ENCODE measurements at regions of chr10 and their contacts with region 1.

Region 1: GRCh38 chr10:93554760-93555432 is 11.6 kb upstream of the FFAR4 start:
- DNase-seq: peak; percentile 58 to 93
- H3K4me3 ChIP-seq: no peak overlapping the region
- H3K27ac ChIP-seq: no peak overlapping the region
- H3K4me1 ChIP-seq: peaks cover 0 to 4% (median 1%) of the 10 kb centered on the region in 4 experiments; a peak in 2 of 7 replicates
- H3K27me3 ChIP-seq: no peaks in the 10 kb centered on the region
- CTCF ChIP-seq: peak; percentile 78 to 96 (median 93)
- EP300 ChIP-seq: no peak
- POLR2A ChIP-seq: no peak
- RAD21 ChIP-seq: peak; percentile 77 to 78

Region 2: GRCh38 chr10:93541402-93542357 is 13.2 kb before region 1 on chr10:
- CTCF ChIA-PET with region 1: interaction called, 78 read pairs
- POLR2A ChIA-PET with region 1: no interaction called
- DNase-seq: peak in 1 of 2 experiments; percentile 83
- H3K4me3 ChIP-seq: no peak overlapping the region; a peak in 1 of 8 replicates
- H3K27ac ChIP-seq: no peak overlapping the region
- H3K4me1 ChIP-seq: no peaks in the 10 kb centered on the region
- H3K27me3 ChIP-seq: peaks cover 0 to 3% (median 0%) of the 10 kb centered on the region in 4 experiments; a peak in 1 of 7 replicates
- CTCF ChIP-seq: peak; percentile 75 to 92 (median 90)
- EP300 ChIP-seq: no peak
- POLR2A ChIP-seq: no peak
- RAD21 ChIP-seq: peak; percentile 69 to 76

Region 3: GRCh38 chr10:93591065-93591808 is 36.3 kb after region 1 on chr10:
- CTCF ChIA-PET with region 1: interaction called, 10 read pairs
- POLR2A ChIA-PET with region 1: no interaction called
- DNase-seq: no peak
- H3K4me3 ChIP-seq: no peak overlapping the region
- H3K27ac ChIP-seq: no peak overlapping the region
- H3K4me1 ChIP-seq: peaks cover 3 to 5% (median 4%) of the 10 kb centered on the region in 4 experiments; a peak in 6 of 7 replicates
- H3K27me3 ChIP-seq: peaks cover 0 to 1% (median 0%) of the 10 kb centered on the region in 4 experiments; a peak in 2 of 7 replicates
- CTCF ChIP-seq: no peak
- EP300 ChIP-seq: no peak
- POLR2A ChIP-seq: no peak
- RAD21 ChIP-seq: no peak

Region 4: GRCh38 chr10:93612311-93612710 is 57.4 kb after region 1 on chr10 and contains the start of gene PDE6C:
- CTCF ChIA-PET with region 1: interaction called, 10 read pairs
- POLR2A ChIA-PET with region 1: no interaction called
- DNase-seq: no peak
- H3K4me3 ChIP-seq: no peak within 1 kb of the TSS
- H3K27ac ChIP-seq: no peak within 1 kb of the TSS
- H3K4me1 ChIP-seq: peaks cover 0 to 4% (median 1%) of the 10 kb centered on the region in 4 experiments; a peak in 1 of 7 replicates
- H3K27me3 ChIP-seq: no peaks in the 10 kb centered on the region
- CTCF ChIP-seq: no peak
- EP300 ChIP-seq: no peak
- POLR2A ChIP-seq: no peak
- RAD21 ChIP-seq: no peak
- total RNA-seq, gene PDE6C: not detected in 2 replicates

Region 5: DNA sequence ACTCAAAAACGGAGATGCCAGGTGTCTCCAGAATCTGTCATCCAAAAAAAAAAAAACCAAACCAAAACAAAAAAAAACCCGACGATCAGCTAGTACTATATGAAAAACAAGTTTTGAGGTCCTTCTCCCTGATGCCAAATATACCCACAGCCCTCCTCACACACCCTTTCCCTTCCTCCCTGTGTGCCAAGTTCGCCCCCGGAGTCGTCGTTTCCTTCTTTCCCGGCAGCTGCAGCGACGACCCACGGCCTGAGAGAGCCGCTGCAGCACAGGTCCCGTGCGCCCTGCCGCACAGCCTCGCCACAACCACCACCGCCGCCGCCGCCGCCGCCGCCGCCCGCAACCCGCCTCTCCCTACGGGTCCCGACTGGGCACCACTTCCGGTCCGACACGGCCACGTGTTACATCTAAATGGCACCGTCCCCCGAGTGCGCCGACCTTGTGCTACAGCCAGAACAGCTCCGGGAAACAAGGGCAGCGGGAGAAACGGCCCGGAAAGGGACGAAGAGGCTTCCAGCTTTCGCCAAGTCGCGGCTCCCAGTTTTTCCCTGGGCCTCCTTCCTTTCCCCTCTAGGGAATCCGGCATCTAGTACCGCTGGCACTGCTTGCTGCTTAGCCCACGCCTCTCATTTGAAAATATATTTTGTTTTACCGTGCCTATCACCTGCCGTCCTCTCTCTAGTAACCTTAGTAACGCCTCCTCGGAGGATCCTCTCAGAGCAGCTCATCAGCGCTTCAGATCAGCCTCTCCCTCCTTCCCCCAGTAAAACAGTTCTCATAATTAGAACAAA is 147.5 kb after region 1 on chr10 and contains the start of gene FRA10AC1:
- CTCF ChIA-PET with region 1: interaction called, 14 read pairs
- POLR2A ChIA-PET with region 1: no interaction called
- DNase-seq: peak; percentile 65 to 97
- H3K4me3 ChIP-seq: peak within 1 kb of the TSS; percentile 76 to 85 (median 77)
- H3K27ac ChIP-seq: 0 out of 2 replicates have a peak within 1 kb of the TSS, but pooled peaks have one; percentile 24
- H3K4me1 ChIP-seq: peaks cover 0 to 3% (median 1%) of the 10 kb centered on the region in 4 experiments; a peak in 1 of 7 replicates
- H3K27me3 ChIP-seq: no peaks in the 10 kb centered on the region
- CTCF ChIP-seq: peak; percentile 45 to 62 (median 51); a peak in 3 of 4 replicates
- EP300 ChIP-seq: peak in 1 of 2 experiments; percentile 94; a peak in 2 of 3 replicates
- POLR2A ChIP-seq: peak; percentile 81 to 88
- RAD21 ChIP-seq: peak; percentile 46 to 59
- total RNA-seq, gene FRA10AC1: 11.9 and 13.5 TPM in 2 replicates